Left cardiac atrium (tissue), 4 donors: ENCODE measurements at regions of chr4 and their contacts with region 1.

Region 1: DNA sequence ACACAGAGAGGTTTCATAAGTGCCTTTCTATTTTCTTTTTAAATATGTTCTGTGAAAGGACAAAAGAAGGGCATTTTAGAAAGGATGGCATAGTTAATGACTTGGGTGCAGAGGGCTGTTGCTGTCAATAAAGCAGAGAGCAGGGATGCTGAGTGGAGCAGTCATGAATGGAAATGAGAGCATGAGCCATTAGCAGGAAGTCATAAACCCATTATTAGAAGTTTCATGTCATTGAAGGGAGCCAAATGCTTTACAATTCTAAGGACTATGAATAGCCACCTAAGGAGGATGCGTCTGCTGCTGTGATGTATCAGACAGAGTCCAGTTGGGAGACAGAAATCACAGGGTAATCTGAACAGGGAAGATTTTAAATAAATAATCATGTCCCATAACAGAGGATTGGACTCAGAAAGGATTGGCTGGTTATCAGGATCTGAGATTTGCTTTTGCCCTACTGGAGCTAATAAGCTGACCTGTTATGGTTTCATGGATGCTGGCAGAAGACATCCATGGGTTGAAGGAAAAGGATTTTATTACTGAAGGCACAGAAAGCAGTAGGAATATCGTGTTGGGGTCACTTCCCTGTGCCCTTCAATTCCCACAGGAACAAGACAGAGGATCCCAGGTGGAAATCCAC is 47.5 kb upstream of the WDR19 start:
- DNase-seq: no peak
- ATAC-seq: no peak

Region 2: DNA sequence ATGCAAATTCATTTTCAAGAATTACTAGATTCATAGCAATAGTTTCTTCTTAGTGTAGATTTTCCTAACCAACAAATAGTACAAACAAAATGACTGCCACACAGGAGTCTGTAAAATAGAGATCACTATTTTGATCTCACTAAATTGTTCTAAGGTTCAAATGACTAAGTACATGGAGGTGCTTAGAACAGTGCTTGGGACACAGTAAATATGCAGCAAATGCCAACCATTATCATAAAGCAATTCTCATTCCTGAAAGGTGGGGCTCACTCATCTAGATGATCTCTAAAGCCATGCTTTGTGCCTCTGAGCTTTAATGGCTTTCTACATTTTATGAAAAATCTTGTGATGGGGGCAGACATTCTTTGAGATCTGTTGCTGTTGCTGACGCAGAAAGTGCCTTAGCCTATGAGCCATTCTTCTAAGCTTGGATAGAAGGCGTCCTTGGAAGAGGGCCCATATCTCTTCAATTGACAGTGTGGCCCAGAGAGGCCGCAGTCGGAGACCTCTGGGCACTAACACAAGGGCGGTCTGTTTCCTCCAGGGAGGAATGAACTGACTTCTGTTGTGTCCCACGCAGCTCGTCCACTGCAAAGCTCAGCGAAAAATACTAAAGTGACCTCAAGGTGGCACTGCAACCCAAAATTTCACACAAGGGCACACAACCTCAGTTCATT is 375.6 kb before region 1 on chr4:
- intact Hi-C with region 1: loop called in 1 of 2 experiments (anchors 5 kb)
- DNase-seq: peak; percentile 62
- ATAC-seq: peak; percentile 89 to 90

Region 3: DNA sequence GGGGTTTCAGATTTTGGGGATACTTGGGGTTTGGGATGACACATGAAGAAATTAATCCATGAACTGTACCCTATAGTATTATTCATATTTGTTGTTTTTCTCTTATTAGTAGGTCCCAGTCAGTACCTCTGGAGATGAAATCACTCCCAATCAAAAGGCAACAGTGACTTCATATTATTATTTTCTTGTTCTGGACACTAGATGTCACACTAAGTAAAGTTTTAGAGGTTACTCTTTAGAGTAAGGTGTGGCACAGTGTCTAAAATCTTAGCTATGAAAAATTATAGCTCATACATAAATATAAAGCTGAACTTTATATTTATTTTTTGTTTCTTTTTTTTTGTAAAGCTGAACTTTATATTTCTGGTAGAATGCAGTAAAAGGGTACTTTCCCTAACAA is 232.1 kb before region 1 on chr4:
- intact Hi-C with region 1: loop called (anchors 2 to 5 kb)
- DNase-seq: no peak
- ATAC-seq: peak; percentile 31 to 57